ENCODE measurements at regions of chr12 and their contacts with region 1.

Region 1: GRCh38 chr12:101414533-101415119 is 7.1 kb upstream of the ARL1 start:
- DNase-seq: no peak
- ATAC-seq: no peak

Region 2: DNA sequence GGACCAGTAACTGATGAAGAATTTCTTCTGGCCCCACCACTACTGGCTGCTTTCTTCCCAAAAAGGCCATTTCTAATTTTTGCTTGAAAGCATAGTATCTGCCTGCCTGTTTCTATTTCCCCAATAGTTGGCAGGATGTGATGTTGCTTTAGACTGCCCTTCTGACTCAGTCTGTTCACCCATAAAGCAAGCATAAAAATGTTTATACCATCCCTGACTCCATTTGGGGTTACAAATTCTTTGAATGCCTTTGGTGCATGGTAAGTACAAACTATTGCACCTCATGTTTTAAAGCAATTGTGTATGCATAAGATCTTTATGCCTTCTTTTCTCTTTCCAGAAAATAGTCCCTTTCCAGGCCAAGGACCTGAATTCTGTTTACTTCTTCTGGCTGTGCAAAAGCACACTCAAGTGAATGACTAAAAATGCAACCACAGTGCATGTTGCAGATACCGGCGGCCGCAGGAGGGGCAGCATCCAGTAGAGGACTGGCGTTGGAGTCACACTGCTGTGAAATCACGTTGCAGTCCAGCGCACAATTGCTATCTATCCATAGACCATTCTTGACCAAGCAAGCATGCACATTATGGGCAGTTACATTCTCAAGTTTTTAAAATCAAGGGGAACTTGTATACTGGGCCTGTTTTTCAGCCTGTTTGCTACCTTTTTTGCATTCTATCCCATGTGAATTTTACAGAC is 287.0 kb before region 1 on chr12:
- intact Hi-C with region 1: no loop called
- DNase-seq: no peak
- ATAC-seq: peak in 1 of 2 donors; percentile 15

Region 3: DNA sequence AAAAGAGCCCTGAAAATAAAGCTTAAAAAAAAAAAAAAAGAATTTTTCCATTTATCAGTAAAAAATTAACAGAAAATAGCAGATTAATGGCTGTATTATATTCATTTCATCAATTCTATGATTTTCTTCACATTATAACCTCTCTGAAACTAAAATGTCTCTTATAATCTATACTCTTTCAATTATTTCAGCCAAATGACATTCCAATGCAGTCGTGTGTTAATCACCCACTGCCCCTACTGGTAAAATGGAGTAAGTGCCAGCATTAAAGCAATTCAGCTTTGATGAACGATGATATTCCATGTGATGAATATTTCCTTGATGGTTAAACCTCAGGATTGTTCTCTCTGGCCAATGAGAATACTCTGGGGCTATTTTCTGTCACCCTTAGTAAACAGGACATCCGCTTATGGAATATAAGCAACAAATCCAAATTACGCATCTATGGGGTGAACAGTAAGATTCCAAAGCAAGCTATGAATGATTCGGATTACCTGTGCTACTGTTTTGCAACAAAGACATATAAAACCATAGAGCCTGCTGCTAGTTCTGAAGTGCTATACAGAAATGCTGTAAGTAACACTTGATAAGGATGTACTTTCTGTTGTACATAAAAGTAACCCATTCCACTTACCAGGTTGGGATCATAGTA is 344.9 kb after region 1 on chr12:
- intact Hi-C with region 1: loop called in 1 of 2 experiments (anchors 10 kb)
- DNase-seq: no peak
- ATAC-seq: no peak

Region 4: GRCh38 chr12:101830367-101831325 is 416.0 kb after region 1 on chr12 and contains the start of gene GNPTAB:
- intact Hi-C with region 1: loop called in 1 of 2 experiments (anchors 5 kb)
- DNase-seq: peak; percentile 95
- ATAC-seq: peak; percentile 97
- total RNA-seq, gene GNPTAB: 41.1 to 45.1 TPM